Activated CD8-positive, alpha-beta memory T cell treated with anti-CD3 and anti-CD28 coated beads, Interleukin-2, amount 10 ng/mL, durations not matched to agents 7 days and 5 days (primary cell): ENCODE measurements at regions of chr10 and their contacts with region 1.

Region 1: GRCh38 chr10:6401562-6402348 is 178.3 kb downstream of the PRKCQ start:
- DNase-seq: peak; percentile 72
- ATAC-seq: peak; percentile 89
- H3K4me3 Mint-ChIP-seq: no peak overlapping the region
- H3K27ac Mint-ChIP-seq: no peak overlapping the region
- H3K4me1 Mint-ChIP-seq: peaks cover 35% of the 10 kb centered on the region
- H3K27me3 Mint-ChIP-seq: peaks cover 17% of the 10 kb centered on the region

Region 2: DNA sequence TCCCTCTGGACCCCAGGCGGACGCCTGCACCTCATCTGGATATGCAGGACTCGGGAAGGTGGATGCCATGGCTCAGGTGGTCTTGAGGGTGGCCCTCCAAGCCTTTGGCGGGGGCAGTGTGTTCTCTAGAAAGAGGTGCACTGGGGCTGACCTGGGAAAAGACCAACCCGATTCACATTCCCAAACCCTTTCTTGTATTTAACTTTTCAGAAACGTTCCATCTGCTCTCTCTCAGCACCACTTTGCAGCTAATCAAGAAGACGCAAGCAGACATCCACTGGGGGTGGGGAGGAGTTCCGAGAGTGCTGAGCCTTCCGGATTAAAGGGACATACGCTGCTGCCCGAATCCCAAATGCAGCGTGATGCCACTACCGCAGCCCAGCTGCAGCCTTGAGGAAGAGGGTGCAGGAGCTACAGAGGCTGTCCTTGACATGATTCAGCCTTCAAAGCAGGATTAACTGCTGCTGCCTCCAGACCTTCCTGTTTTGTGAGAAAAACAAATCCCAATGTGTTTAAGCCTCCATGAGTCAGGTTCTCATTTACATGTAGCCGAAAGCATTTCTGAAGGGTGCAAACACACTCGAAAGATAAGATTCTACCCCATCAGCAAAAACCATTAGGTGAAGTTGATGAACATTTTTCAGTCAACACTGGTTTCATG is 273.0 kb before region 1 on chr10:
- CTCF ChIA-PET with region 1: interaction called, 11 read pairs
- DNase-seq: no peak
- ATAC-seq: no peak
- H3K4me3 Mint-ChIP-seq: no peak overlapping the region
- H3K27ac Mint-ChIP-seq: no peak overlapping the region
- H3K4me1 Mint-ChIP-seq: peaks cover 44% of the 10 kb centered on the region
- H3K27me3 Mint-ChIP-seq: no peaks in the 10 kb centered on the region

Region 3: DNA sequence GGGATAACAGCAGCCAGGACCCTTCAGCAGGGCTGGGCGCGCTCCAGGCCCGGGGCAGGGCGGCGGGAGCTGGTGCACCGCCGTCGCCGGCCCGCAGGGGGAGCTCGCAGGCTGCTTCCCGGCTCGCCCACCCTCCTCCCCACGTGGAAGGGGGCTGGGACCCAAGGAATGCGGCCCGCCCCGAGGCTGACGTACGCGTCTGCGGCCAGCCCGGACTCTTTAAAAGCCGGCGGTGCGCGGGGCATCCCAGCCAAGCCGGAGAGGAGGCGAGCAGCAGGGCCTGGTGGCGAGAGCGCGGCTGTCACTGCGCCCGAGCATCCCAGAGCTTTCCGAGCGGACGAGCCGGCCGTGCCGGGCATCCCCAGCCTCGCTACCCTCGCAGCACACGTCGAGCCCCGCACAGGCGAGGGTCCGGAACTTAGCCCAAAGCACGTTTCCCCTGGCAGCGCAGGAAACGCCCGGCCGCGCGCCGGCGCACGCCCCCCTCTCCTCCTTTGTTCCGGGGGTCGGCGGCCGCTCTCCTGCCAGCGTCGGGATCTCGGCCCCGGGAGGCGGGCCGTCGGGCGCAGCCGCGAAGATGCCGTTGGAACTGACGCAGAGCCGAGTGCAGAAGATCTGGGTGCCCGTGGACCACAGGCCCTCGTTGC is 198.9 kb before region 1 on chr10 and contains the start of gene PFKFB3:
- CTCF ChIA-PET with region 1: interaction called, 182 read pairs
- DNase-seq: peak; percentile 95
- ATAC-seq: peak; percentile 70
- H3K4me3 Mint-ChIP-seq: peak within 1 kb of the TSS; percentile 98
- H3K27ac Mint-ChIP-seq: peak within 1 kb of the TSS; percentile 93
- H3K4me1 Mint-ChIP-seq: peaks cover 36% of the 10 kb centered on the region
- H3K27me3 Mint-ChIP-seq: no peaks in the 10 kb centered on the region
- total RNA-seq, gene PFKFB3: 57.1 to 59.3 TPM

Region 4: DNA sequence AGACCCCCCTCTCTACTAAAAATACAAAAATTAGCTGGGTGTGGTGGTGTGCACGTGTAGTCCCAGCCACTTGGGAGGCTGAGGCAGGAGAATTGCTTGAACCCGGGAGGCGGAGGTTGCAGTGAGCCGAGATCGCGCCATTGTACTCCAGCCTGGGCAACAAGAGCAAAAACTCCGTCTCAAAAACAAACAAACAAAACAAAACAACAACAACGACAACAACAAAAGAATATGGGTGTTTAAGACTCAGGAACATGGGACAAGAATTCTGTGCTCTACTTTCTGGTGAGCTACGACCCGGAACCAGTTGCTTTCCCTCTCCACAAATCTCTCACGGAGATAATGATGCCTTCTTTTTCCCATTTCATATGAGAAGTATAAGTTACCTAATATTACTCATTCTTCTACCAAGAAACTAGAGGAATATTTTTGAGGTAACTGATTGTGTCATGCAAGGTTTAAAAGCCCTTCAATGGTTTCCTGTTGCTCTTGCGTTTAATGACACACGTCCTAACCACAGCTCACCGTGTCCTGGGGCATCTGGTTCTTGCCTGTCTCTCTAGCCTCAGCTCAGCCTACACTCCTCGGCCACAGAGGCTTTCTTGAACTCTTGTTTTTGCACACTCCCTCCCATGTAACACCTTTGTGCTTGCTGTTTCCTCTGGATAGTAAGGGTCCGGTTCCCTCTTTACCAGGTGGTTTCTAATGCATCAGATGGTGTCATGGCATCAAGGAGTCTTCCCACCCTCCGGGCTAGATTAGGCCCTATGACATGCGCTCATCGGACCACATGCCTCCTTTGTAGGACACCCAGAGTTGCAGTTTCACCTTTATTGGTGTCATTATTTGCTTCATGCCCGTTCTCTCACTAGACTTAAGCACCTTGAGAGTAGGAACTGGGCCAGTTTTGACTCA is 131.5 kb before region 1 on chr10:
- CTCF ChIA-PET with region 1: interaction called, 15 read pairs
- DNase-seq: peak; percentile 95
- ATAC-seq: peak; percentile 79
- H3K4me3 Mint-ChIP-seq: peak overlapping the region; percentile 46
- H3K27ac Mint-ChIP-seq: peak overlapping the region; percentile 93
- H3K4me1 Mint-ChIP-seq: peaks cover 68% of the 10 kb centered on the region
- H3K27me3 Mint-ChIP-seq: peaks cover 5% of the 10 kb centered on the region

Region 5: GRCh38 chr10:6382081-6382480 is 19.7 kb before region 1 on chr10:
- CTCF ChIA-PET with region 1: interaction called, 20 read pairs
- DNase-seq: peak; percentile 61
- ATAC-seq: peak; percentile 64
- H3K4me3 Mint-ChIP-seq: peak overlapping the region; percentile 64
- H3K27ac Mint-ChIP-seq: peak overlapping the region; percentile 77
- H3K4me1 Mint-ChIP-seq: peaks cover 22% of the 10 kb centered on the region
- H3K27me3 Mint-ChIP-seq: no peaks in the 10 kb centered on the region

Region 6: GRCh38 chr10:6667679-6668270 is 266.0 kb after region 1 on chr10:
- CTCF ChIA-PET with region 1: interaction called, 17 read pairs
- DNase-seq: peak; percentile 67
- ATAC-seq: peak; percentile 34
- H3K4me3 Mint-ChIP-seq: no peak overlapping the region
- H3K27ac Mint-ChIP-seq: no peak overlapping the region
- H3K4me1 Mint-ChIP-seq: peaks cover 24% of the 10 kb centered on the region
- H3K27me3 Mint-ChIP-seq: peaks cover 8% of the 10 kb centered on the region